Panc1 (cell line): ENCODE measurements at regions of chr14 and their contacts with region 1.

Region 1: GRCh38 chr14:30521899-30522736 is 36.8 kb upstream of the G2E3 start:
- DNase-seq: peak; percentile 18
- ATAC-seq: no peak
- H3K4me3 ChIP-seq: no peak overlapping the region
- H3K27ac ChIP-seq: no peak overlapping the region
- H3K4me1 ChIP-seq: no peaks in the 10 kb centered on the region
- H3K27me3 ChIP-seq: no peaks in the 10 kb centered on the region
- CTCF ChIP-seq: peak; percentile 67; the same call in 1 of the 2 replicates

Region 2: GRCh38 chr14:30375296-30375892 is 146.7 kb before region 1 on chr14:
- CTCF ChIA-PET with region 1: interaction called, 4 read pairs
- POLR2A ChIA-PET with region 1: no interaction called
- in situ Hi-C with region 1: no loop called
- intact Hi-C with region 1: loop called (anchors 10 kb)
- DNase-seq: no peak
- ATAC-seq: peak; percentile 77; the same call in 1 of the 2 replicates
- H3K4me3 ChIP-seq: no peak overlapping the region
- H3K27ac ChIP-seq: no peak overlapping the region
- H3K4me1 ChIP-seq: no peaks in the 10 kb centered on the region
- H3K27me3 ChIP-seq: no peaks in the 10 kb centered on the region
- CTCF ChIP-seq: peak; percentile 83

Region 3: GRCh38 chr14:30385925-30386324 is 136.2 kb before region 1 on chr14:
- CTCF ChIA-PET with region 1: no interaction called
- POLR2A ChIA-PET with region 1: no interaction called
- in situ Hi-C with region 1: no loop called
- intact Hi-C with region 1: no loop called
- DNase-seq: no peak
- ATAC-seq: no peak
- H3K4me3 ChIP-seq: no peak overlapping the region
- H3K27ac ChIP-seq: no peak overlapping the region
- H3K4me1 ChIP-seq: no peaks in the 10 kb centered on the region
- H3K27me3 ChIP-seq: no peaks in the 10 kb centered on the region
- CTCF ChIP-seq: no peak

Region 4: GRCh38 chr14:30450631-30451545 is 71.2 kb before region 1 on chr14:
- CTCF ChIA-PET with region 1: no interaction called
- POLR2A ChIA-PET with region 1: no interaction called
- in situ Hi-C with region 1: no loop called
- intact Hi-C with region 1: no loop called
- DNase-seq: no peak
- ATAC-seq: no peak
- H3K4me3 ChIP-seq: no peak overlapping the region
- H3K27ac ChIP-seq: no peak overlapping the region
- H3K4me1 ChIP-seq: no peaks in the 10 kb centered on the region
- H3K27me3 ChIP-seq: no peaks in the 10 kb centered on the region
- CTCF ChIP-seq: no peak

Region 5: GRCh38 chr14:30500222-30500621 is 21.9 kb before region 1 on chr14:
- CTCF ChIA-PET with region 1: no interaction called
- POLR2A ChIA-PET with region 1: interaction called, 10 read pairs
- in situ Hi-C with region 1: no loop called
- intact Hi-C with region 1: no loop called
- DNase-seq: no peak
- ATAC-seq: no peak
- H3K4me3 ChIP-seq: no peak overlapping the region
- H3K27ac ChIP-seq: no peak overlapping the region
- H3K4me1 ChIP-seq: no peaks in the 10 kb centered on the region
- H3K27me3 ChIP-seq: peaks cover 3% of the 10 kb centered on the region; the same call in 1 of the 2 replicates
- CTCF ChIP-seq: no peak